GM12878 (cell line): ENCODE measurements at regions of chr12 and their contacts with region 1.

Region 1: GRCh38 chr12:92570056-92570753 is 132.6 kb upstream of the PLEKHG7 start:
- DNase-seq: peak; percentile 93
- ATAC-seq: peak; percentile 94
- H3K4me3 ChIP-seq: no peak overlapping the region
- H3K27ac ChIP-seq: peak overlapping the region; percentile 55
- H3K4me1 ChIP-seq: peaks cover 11% of the 10 kb centered on the region; the same call in 1 of the 2 replicates
- H3K27me3 ChIP-seq: no peaks in the 10 kb centered on the region
- CTCF ChIP-seq: peak; percentile 47 to 76 (median 48); a peak in 5 of 6 replicates
- EP300 ChIP-seq: no peak
- POLR2A ChIP-seq: no peak
- RAD21 ChIP-seq: peak; percentile 81

Region 2: GRCh38 chr12:91577586-91578539 is 992.3 kb before region 1 on chr12:
- CTCF ChIA-PET with region 1: interaction called, 9 read pairs
- POLR2A ChIA-PET with region 1: no interaction called
- RAD21 ChIA-PET with region 1: interaction called, 4 read pairs
- SMC1A ChIA-PET with region 1: interaction called, 10 read pairs
- in situ Hi-C with region 1: no loop called
- intact Hi-C with region 1: loop called (anchors 5 kb)
- DNase-seq: no peak
- ATAC-seq: peak; percentile 73
- H3K4me3 ChIP-seq: no peak overlapping the region; the same call in 1 of the 2 replicates
- H3K27ac ChIP-seq: no peak overlapping the region
- H3K4me1 ChIP-seq: no peaks in the 10 kb centered on the region
- H3K27me3 ChIP-seq: no peaks in the 10 kb centered on the region
- CTCF ChIP-seq: peak; percentile 36 to 51 (median 41); a peak in 3 of 6 replicates
- EP300 ChIP-seq: no peak
- POLR2A ChIP-seq: no peak
- RAD21 ChIP-seq: peak; percentile 47; the same call in 1 of the 2 replicates

Region 3: GRCh38 chr12:92034858-92035401 is 535.3 kb before region 1 on chr12:
- CTCF ChIA-PET with region 1: interaction called, 9 read pairs
- POLR2A ChIA-PET with region 1: no interaction called
- RAD21 ChIA-PET with region 1: interaction called, 6 read pairs
- SMC1A ChIA-PET with region 1: interaction called, 7 read pairs
- in situ Hi-C with region 1: no loop called
- intact Hi-C with region 1: loop called (anchors 10 kb)
- DNase-seq: peak; percentile 99
- ATAC-seq: peak; percentile 84
- H3K4me3 ChIP-seq: peak overlapping the region; percentile 27
- H3K27ac ChIP-seq: peak overlapping the region; percentile 80
- H3K4me1 ChIP-seq: peaks cover 13% of the 10 kb centered on the region
- H3K27me3 ChIP-seq: no peaks in the 10 kb centered on the region
- CTCF ChIP-seq: no peak
- EP300 ChIP-seq: peak; percentile 89 to 90
- POLR2A ChIP-seq: peak; percentile 36; the same call in 1 of the 2 replicates
- RAD21 ChIP-seq: peak; percentile 41

Region 4: DNA sequence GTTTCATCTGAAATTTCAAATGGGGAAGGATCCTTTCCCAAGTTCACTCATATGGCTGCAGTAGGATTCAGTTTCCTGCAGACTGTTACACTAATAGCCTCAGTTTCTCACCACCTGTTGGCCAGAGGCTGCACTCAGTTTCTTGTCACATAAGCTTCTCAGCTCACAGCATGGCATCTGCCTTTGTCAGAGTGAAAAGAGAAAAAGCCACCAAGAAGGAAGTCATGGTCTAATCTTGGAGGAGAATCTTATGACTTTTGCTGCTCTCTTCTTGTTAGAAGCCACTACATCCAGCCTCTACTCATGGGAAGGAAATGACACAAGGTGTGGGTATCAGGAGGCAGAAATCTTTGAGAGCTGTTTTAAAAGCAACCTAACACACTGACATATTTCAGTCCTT is 385.2 kb before region 1 on chr12:
- CTCF ChIA-PET with region 1: no interaction called
- POLR2A ChIA-PET with region 1: no interaction called
- RAD21 ChIA-PET with region 1: no interaction called
- SMC1A ChIA-PET with region 1: no interaction called
- in situ Hi-C with region 1: no loop called
- intact Hi-C with region 1: no loop called
- DNase-seq: peak; percentile 80
- ATAC-seq: peak; percentile 81
- H3K4me3 ChIP-seq: no peak overlapping the region
- H3K27ac ChIP-seq: peak overlapping the region; percentile 77
- H3K4me1 ChIP-seq: peaks cover 28% of the 10 kb centered on the region
- H3K27me3 ChIP-seq: no peaks in the 10 kb centered on the region
- CTCF ChIP-seq: no peak
- EP300 ChIP-seq: peak; percentile 14 to 61; a peak in 1 of 4 replicates
- POLR2A ChIP-seq: no peak
- RAD21 ChIP-seq: peak; percentile 13; the same call in 1 of the 2 replicates

Region 5: GRCh38 chr12:92408072-92408900 is 161.9 kb before region 1 on chr12:
- CTCF ChIA-PET with region 1: interaction called, 10 read pairs
- POLR2A ChIA-PET with region 1: interaction called, 4 read pairs
- RAD21 ChIA-PET with region 1: interaction called, 16 read pairs
- SMC1A ChIA-PET with region 1: interaction called, 40 read pairs
- in situ Hi-C with region 1: no loop called
- intact Hi-C with region 1: loop called (anchors 1 kb)
- DNase-seq: no peak
- ATAC-seq: peak; percentile 74
- H3K4me3 ChIP-seq: no peak overlapping the region
- H3K27ac ChIP-seq: peak overlapping the region; percentile 24
- H3K4me1 ChIP-seq: peaks cover 31% of the 10 kb centered on the region
- H3K27me3 ChIP-seq: no peaks in the 10 kb centered on the region
- CTCF ChIP-seq: peak; percentile 58 to 82 (median 72)
- EP300 ChIP-seq: no peak
- POLR2A ChIP-seq: no peak
- RAD21 ChIP-seq: peak; percentile 94

Region 6: DNA sequence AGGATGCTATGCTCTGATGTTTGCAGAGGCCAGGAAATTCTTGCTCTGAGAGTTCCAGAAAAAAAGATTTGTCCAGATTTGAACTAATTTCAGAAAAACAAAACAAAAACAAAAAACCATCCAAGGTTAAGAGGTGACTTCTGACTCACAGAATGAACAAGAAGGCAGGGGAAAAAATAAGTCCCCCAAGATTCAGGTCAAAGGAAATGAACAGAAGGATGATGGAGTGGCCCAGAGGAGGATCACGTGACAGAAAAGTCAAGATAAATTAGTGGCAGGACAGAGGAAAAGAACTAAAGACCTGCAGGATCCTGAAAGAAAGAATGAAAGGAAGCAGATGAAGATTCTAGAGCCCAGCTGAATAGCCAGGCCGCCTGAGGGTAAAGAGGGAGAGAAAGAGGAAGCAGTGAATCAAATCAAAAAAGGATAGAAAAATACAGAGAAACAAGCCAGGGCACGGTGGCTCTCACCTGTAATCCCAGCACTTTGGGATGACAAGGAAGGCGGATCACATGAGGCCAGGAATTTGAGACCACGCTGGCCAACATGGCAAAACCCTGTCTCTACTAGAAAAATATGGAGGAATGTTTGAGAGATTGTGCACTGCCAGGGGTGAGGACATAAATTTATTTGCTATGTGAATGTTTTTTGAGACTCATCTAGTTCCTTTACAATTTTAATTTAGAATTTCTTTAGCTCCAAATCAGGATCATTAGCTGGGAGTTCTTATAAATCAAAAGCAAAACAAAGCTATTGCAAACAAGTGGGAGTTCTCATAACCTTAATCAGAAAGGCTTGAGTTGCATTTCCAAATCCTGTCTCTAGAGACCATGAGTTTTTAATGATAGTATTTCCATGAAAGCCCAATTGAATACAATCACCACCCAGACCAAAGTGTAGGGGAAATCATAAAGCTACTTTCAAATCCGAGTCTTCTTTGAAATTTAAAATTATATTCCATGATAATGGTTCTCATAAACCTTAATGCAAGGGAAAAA is 84.6 kb before region 1 on chr12:
- CTCF ChIA-PET with region 1: no interaction called
- POLR2A ChIA-PET with region 1: no interaction called
- RAD21 ChIA-PET with region 1: interaction called, 61 read pairs
- SMC1A ChIA-PET with region 1: interaction called, 805 read pairs
- in situ Hi-C with region 1: no loop called
- intact Hi-C with region 1: no loop called
- DNase-seq: no peak
- ATAC-seq: peak; percentile 58
- H3K4me3 ChIP-seq: no peak overlapping the region
- H3K27ac ChIP-seq: peak overlapping the region; percentile 90
- H3K4me1 ChIP-seq: peaks cover 53% of the 10 kb centered on the region
- H3K27me3 ChIP-seq: no peaks in the 10 kb centered on the region
- CTCF ChIP-seq: no peak
- EP300 ChIP-seq: no peak
- POLR2A ChIP-seq: no peak
- RAD21 ChIP-seq: no peak

Region 7: DNA sequence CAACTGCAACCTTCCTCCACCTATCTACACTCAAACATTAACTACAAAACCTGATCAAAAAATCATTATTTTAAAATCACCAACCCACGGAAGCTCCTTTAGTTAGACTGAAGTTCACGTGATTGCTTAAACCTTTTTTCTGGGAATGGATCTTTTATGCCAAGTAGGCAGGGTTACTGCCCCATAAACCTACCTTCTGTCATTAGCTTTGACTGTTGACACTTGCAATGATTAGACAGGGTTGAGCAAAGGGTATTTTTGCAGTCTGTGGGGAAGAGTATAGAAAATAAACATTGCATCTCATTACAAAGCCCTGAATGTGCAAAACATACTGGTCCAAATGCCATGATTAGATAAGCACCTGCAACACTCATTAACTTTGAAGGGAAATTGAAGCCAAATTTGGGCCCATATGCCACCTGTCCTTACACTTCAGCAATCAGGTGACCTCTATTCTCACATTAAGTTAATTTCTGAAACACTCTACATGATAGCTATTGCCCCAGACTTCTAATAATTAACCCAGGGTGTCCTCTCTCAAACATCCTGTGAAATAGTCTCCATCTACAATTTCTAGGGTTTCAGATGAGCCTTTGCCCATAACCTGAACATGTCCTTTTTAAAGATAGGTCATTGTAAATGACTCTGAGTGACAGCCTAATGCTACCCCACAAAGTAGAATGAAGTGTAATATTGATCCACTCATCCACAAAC is 23.4 kb before region 1 on chr12:
- CTCF ChIA-PET with region 1: interaction called, 8 read pairs
- POLR2A ChIA-PET with region 1: interaction called, 204 read pairs
- RAD21 ChIA-PET with region 1: interaction called, 269 read pairs
- SMC1A ChIA-PET with region 1: interaction called, 319 read pairs
- in situ Hi-C with region 1: no loop called
- intact Hi-C with region 1: no loop called
- DNase-seq: no peak
- ATAC-seq: peak; percentile 60
- H3K4me3 ChIP-seq: no peak overlapping the region
- H3K27ac ChIP-seq: no peak overlapping the region
- H3K4me1 ChIP-seq: peaks cover 43% of the 10 kb centered on the region
- H3K27me3 ChIP-seq: no peaks in the 10 kb centered on the region
- CTCF ChIP-seq: no peak
- EP300 ChIP-seq: peak in 1 of 2 experiments; percentile 52; a peak in 2 of 4 replicates
- POLR2A ChIP-seq: no peak
- RAD21 ChIP-seq: no peak

Region 8: GRCh38 chr12:92649511-92650227 is 79.5 kb after region 1 on chr12:
- CTCF ChIA-PET with region 1: interaction called, 29 read pairs
- POLR2A ChIA-PET with region 1: no interaction called
- RAD21 ChIA-PET with region 1: interaction called, 15 read pairs
- SMC1A ChIA-PET with region 1: interaction called, 19 read pairs
- in situ Hi-C with region 1: loop called (anchors 5 kb)
- intact Hi-C with region 1: loop called (anchors 1 kb)
- DNase-seq: peak; percentile 67
- ATAC-seq: peak; percentile 98
- H3K4me3 ChIP-seq: no peak overlapping the region
- H3K27ac ChIP-seq: no peak overlapping the region
- H3K4me1 ChIP-seq: no peaks in the 10 kb centered on the region
- H3K27me3 ChIP-seq: no peaks in the 10 kb centered on the region
- CTCF ChIP-seq: peak; percentile 72 to 85 (median 76); a peak in 5 of 6 replicates
- EP300 ChIP-seq: no peak
- POLR2A ChIP-seq: no peak
- RAD21 ChIP-seq: peak; percentile 96

Region 9: DNA sequence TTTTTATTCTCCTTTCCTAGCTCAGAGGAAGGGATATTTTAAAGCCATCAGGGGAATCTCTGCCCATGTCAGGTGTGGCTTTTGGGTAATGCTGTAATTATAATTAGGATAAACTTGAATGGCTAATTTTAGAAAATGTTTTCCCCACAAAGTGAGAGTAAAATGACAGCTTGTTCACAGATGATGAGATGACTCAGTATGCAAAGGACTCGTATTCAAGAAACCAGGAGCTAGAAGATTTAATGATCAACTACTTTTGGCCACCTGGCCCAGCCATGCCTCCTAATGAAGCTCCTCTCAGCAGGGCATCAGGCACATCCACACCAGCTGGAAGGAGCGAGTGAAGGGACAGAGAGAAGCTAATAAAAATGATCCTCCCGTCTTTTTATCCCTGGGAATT is 103.6 kb after region 1 on chr12:
- CTCF ChIA-PET with region 1: no interaction called
- POLR2A ChIA-PET with region 1: no interaction called
- RAD21 ChIA-PET with region 1: no interaction called
- SMC1A ChIA-PET with region 1: no interaction called
- in situ Hi-C with region 1: no loop called
- intact Hi-C with region 1: no loop called
- DNase-seq: peak; percentile 31
- ATAC-seq: peak; percentile 78
- H3K4me3 ChIP-seq: no peak overlapping the region
- H3K27ac ChIP-seq: no peak overlapping the region
- H3K4me1 ChIP-seq: no peaks in the 10 kb centered on the region
- H3K27me3 ChIP-seq: no peaks in the 10 kb centered on the region
- CTCF ChIP-seq: no peak
- EP300 ChIP-seq: no peak
- POLR2A ChIP-seq: no peak
- RAD21 ChIP-seq: no peak

Region 10: GRCh38 chr12:92827836-92828431 is 257.7 kb after region 1 on chr12:
- CTCF ChIA-PET with region 1: no interaction called
- POLR2A ChIA-PET with region 1: no interaction called
- RAD21 ChIA-PET with region 1: no interaction called
- SMC1A ChIA-PET with region 1: no interaction called
- in situ Hi-C with region 1: no loop called
- intact Hi-C with region 1: no loop called
- DNase-seq: peak; percentile 12
- ATAC-seq: peak; percentile 81
- H3K4me3 ChIP-seq: no peak overlapping the region
- H3K27ac ChIP-seq: no peak overlapping the region
- H3K4me1 ChIP-seq: no peaks in the 10 kb centered on the region
- H3K27me3 ChIP-seq: no peaks in the 10 kb centered on the region
- CTCF ChIP-seq: peak; percentile 65 to 81 (median 81)
- EP300 ChIP-seq: no peak
- POLR2A ChIP-seq: no peak
- RAD21 ChIP-seq: peak; percentile 67